Heart left ventricle (tissue), 16 donors: ENCODE measurements at regions of chr18 and their contacts with region 1.

Region 1: GRCh38 chr18:51051105-51051712 is 21.2 kb downstream of the SMAD4 start:
- DNase-seq: no peak
- ATAC-seq: peak; percentile 68 to 84 (median 76)
- H3K4me3 ChIP-seq: no peak overlapping the region
- H3K27ac ChIP-seq: no peak overlapping the region
- H3K4me1 ChIP-seq: peaks cover 0 to 22% (median 7%) of the 10 kb centered on the region in 12 donors
- H3K27me3 ChIP-seq: no peaks in the 10 kb centered on the region
- CTCF ChIP-seq: peak; percentile 67 to 85 (median 76)
- POLR2A ChIP-seq: no peak

Region 2: GRCh38 chr18:50973367-50974126 is 77.7 kb before region 1 on chr18:
- intact Hi-C with region 1: loop called in 5 of 10 experiments (anchors 5 to 10 kb)
- DNase-seq: no peak
- ATAC-seq: peak in 3 of 4 donors; percentile 58 to 87 (median 76)
- H3K4me3 ChIP-seq: no peak overlapping the region
- H3K27ac ChIP-seq: no peak overlapping the region
- H3K4me1 ChIP-seq: peaks cover 0 to 28% (median 16%) of the 10 kb centered on the region in 12 donors
- H3K27me3 ChIP-seq: no peaks in the 10 kb centered on the region
- CTCF ChIP-seq: no peak
- POLR2A ChIP-seq: no peak